ENCODE measurements at regions of chr17 and their contacts with region 1.

Region 1: GRCh38 chr17:76296186-76296585 is 11.9 kb downstream of the QRICH2 start:
- DNase-seq: no peak
- ATAC-seq: no peak
- H3K4me3 Mint-ChIP-seq: no peak overlapping the region
- H3K27ac Mint-ChIP-seq: no peak overlapping the region
- H3K4me1 Mint-ChIP-seq: peaks cover 3% of the 10 kb centered on the region
- H3K27me3 Mint-ChIP-seq: no peaks in the 10 kb centered on the region
- CTCF ChIP-seq: no peak

Region 2: DNA sequence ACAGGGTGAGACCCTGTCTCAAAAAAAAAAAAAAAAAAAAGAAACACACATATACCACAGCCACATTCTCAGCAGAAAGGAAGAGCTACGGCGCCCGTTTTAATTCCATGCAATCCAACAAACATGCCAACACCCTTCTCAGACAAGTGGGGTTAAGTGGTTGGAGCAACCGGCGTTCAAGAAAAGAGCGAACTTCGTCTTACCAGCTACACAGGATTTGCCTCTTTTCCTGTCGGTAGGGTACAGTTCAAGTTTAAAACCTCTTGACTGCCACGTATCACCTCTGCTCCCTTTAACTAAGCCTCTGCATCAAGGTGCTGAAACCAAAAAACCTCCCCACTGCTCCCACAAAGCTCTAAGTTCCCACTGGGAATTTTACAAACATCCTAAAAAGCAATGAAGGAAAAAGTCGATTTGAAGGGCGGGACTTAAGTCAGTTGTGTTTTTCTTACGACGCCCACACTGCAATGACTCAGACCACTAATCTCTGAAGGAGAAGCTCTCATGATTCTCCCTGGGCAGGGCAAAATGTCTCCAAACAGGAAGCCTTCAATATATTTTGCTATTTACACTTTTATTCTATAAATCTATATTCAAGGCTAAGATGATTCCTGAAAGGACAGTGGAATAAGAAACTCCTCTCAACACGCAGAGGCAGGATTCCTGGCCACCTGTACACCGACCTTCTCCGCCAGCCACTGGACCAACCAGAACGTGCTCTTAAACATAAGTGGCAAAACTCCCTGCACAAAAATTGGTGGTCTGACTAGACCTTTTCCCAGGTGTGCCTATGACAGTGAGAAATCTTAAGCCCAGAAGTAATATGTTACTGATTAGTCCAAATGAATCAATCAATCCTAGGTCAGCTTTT is 242.7 kb before region 1 on chr17:
- CTCF ChIA-PET with region 1: no interaction called
- POLR2A ChIA-PET with region 1: interaction called, 10 read pairs
- intact Hi-C with region 1: no loop called
- DNase-seq: no peak
- ATAC-seq: no peak
- H3K4me3 Mint-ChIP-seq: no peak overlapping the region
- H3K27ac Mint-ChIP-seq: no peak overlapping the region
- H3K4me1 Mint-ChIP-seq: no peaks in the 10 kb centered on the region
- H3K27me3 Mint-ChIP-seq: no peaks in the 10 kb centered on the region
- CTCF ChIP-seq: no peak

Region 3: DNA sequence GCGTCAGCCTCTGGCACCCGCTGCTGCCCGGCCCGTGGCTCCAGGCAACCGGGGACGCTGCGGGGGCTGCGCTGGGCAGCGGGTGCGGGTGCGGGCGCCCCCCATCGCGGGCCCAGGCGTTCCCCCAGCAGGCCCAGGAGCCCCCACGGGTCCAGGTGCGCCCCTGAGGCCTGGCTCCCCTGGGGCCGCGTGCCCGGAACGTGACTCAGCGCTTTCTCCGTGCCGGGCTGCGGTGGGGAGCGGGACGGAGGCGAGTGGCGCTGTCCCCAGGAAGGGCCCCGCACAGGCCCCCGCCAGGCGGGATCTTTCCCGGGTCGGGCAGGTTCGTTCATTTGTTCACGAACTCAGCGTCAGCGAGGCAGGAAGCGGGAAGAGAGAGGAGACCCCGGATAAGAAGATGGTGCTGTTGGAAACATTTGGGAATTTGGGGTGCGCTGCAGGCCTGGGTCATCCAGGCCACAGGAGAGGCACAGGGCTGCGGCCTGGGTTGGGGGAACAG is 174.2 kb before region 1 on chr17:
- CTCF ChIA-PET with region 1: interaction called, 16 read pairs
- POLR2A ChIA-PET with region 1: no interaction called
- intact Hi-C with region 1: loop called (anchors 1 kb)
- DNase-seq: no peak
- ATAC-seq: peak; percentile 29
- H3K4me3 Mint-ChIP-seq: peak overlapping the region; percentile 62
- H3K27ac Mint-ChIP-seq: peak overlapping the region; percentile 50
- H3K4me1 Mint-ChIP-seq: peaks cover 17% of the 10 kb centered on the region
- H3K27me3 Mint-ChIP-seq: peaks cover 3% of the 10 kb centered on the region
- CTCF ChIP-seq: no peak

Region 4: DNA sequence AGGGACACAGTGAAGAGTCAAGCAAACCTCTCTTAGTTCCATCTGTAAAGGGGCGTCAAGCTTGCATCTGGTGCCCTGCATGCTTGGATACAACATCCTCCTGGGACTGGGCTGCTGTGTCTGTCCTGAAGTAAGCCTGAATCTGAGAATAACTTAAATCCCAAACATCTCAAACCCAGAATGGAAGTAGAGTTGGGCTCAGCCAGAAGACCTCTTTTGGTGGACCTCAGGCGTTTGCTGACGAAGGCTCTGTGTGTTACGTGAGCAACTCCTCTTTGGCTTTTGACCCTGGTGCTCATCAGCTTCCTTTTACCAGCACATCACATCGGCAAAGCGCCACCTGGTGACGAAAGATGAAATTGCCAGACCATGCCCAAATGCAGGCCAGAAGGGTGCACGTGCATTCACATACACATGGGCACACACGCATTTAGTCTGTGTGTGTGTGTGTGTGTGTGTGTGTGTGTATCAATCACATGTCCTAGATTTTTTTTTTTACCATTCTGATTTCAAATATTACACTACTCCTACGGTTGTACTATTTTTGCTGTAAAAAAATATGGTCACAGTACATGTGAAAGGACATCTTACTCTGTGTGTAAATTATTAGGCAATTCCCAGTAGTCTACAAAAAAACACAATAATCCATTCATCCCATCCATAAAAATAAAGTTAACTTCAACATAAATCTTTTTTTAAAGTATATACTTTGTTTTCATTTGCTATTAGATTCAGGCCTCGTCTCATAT is 114.0 kb before region 1 on chr17:
- CTCF ChIA-PET with region 1: interaction called, 3 read pairs
- POLR2A ChIA-PET with region 1: no interaction called
- intact Hi-C with region 1: loop called (anchors 1 kb)
- DNase-seq: peak; percentile 87
- ATAC-seq: peak; percentile 97
- H3K4me3 Mint-ChIP-seq: no peak overlapping the region
- H3K27ac Mint-ChIP-seq: no peak overlapping the region
- H3K4me1 Mint-ChIP-seq: peaks cover 34% of the 10 kb centered on the region
- H3K27me3 Mint-ChIP-seq: no peaks in the 10 kb centered on the region
- CTCF ChIP-seq: peak; percentile 21

Region 5: DNA sequence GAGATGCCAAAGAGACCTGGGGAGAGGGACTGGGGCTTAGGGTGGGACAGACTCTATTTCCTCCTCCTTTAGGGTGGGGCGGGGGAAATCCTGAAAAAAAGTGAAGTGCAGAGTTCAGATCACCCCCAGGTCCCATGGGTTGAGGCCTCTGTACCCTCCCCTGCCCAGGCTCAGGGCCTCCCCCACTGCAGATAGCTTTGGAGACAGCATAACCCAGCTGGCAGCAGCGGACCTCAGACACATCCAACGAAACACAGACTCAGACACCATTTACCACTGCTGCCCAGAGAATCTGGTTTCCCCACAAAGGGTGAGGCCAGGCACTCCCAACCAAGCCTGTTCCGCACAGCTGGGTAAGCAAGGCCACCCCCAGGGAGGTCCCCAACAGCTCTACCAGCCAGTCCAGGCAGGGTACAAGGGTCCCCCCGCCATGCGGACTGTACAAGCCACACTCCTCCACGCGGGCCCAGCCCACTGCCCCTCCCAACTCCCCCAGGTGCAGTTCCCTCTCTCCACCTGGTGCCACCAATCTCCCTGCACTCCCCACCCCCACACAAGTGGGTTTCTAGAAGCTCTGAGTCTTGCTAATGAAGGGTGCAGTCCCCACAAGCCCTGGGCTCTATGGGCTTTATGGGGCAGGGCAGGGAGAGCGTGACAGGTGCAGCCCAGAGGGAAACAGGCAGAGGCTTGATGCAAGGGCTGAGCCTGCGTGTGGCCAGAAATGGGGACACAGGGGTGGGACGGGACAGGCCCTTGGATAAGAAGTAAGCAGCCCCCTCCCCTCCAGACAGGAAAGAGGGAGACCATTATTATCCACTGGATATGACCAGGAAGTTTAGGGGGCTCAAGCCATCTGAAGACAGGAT is 196.2 kb after region 1 on chr17:
- CTCF ChIA-PET with region 1: no interaction called
- POLR2A ChIA-PET with region 1: no interaction called
- intact Hi-C with region 1: no loop called
- DNase-seq: peak; percentile 46
- ATAC-seq: peak; percentile 50
- H3K4me3 Mint-ChIP-seq: peak overlapping the region; percentile 82
- H3K27ac Mint-ChIP-seq: peak overlapping the region; percentile 95
- H3K4me1 Mint-ChIP-seq: peaks cover 95% of the 10 kb centered on the region
- H3K27me3 Mint-ChIP-seq: no peaks in the 10 kb centered on the region
- CTCF ChIP-seq: no peak